ENCODE measurements at regions of chr17 and their contacts with region 1.

Region 1: DNA sequence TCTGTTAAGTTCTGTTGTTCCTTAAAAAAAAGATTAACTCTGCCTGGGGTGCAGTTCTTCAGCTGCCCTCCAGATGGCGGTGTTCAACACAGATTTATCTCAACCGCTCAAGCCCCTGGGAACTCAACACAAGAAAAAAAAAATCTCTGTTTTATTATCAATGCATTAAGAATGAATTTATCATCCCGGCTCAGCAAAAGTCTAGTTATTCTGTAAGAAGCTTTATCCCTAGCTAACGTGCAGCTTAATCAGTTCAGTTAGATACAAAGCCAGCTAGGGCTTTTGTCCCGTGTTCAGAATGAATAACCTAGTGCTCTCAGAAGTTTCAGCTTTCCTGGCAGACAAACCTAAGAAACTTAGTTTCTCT is 475.9 kb upstream of the CCL2 start:
- DNase-seq: peak in 1 of 2 donors; percentile 16
- ATAC-seq: no peak

Region 2: DNA sequence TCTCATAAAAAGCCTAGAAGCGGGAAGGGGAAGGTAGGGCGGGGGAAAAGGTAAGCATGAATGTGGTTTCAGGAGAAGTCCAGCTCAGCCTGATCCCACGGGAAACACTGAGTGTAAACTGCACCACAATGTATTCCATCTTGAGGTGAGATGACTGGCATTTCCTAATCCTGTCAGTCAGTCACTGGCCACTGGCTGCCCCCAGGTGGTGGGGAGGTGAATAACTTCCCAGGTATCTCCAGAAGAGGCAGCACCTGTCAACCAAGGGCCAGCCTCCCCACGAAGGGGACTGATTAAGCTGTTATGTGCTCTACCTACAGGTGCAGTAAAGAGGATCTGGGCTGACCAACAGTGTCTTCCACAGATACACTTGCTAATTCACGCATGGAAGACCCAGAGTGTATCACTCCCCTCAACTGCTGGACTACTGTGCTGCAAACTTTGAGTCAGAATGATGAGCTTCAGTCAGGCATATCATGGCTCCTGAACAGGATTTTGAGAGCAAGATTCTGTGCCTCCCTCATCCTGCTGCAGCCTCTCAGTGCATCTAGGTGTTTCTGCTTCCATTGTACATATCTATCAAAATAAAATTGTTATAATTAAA is 367.3 kb after region 1 on chr17:
- intact Hi-C with region 1: loop called in 1 of 2 experiments (anchors 10 kb)
- DNase-seq: peak; percentile 38 to 67
- ATAC-seq: peak; percentile 81

Region 3: GRCh38 chr17:34163646-34164045 is 384.4 kb after region 1 on chr17:
- intact Hi-C with region 1: loop called in 1 of 2 experiments (anchors 5 kb)
- DNase-seq: no peak
- ATAC-seq: no peak

Measured in left colon (tissue), 2 donors.